ENCODE measurements at regions of chr10 and their contacts with region 1.

Region 1: DNA sequence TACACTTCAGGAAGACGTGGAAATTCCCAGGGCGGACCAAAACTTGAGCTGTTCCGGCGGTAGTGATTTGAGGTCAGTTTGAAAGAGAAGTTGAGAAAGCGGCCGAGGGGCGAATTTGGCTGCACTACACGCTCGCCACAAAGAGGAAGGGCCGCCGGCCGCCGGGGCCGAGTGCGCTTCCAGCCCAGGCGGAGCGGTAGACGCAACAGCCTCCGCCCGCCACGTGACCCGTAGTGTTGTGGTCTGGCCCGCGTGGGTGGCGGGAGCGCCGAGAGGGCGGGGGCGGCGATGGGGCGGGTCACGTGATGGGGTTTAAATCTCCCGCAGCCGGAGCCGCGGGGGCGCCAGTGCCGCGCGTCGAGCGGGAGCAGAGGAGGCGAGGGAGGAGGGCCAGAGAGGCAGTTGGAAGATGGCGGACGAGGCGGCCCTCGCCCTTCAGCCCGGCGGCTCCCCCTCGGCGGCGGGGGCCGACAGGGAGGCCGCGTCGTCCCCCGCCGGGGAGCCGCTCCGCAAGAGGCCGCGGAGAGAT is at the start of gene SIRT1:
- DNase-seq: peak; percentile 98
- H3K4me3 ChIP-seq: peak within 1 kb of the TSS; percentile 73
- H3K27ac ChIP-seq: peak within 1 kb of the TSS; percentile 95
- H3K4me1 ChIP-seq: peaks cover 3% of the 10 kb centered on the region
- H3K27me3 ChIP-seq: no peaks in the 10 kb centered on the region
- CTCF ChIP-seq: no peak
- total RNA-seq, gene SIRT1: 11.7 to 20.4 TPM

Region 2: DNA sequence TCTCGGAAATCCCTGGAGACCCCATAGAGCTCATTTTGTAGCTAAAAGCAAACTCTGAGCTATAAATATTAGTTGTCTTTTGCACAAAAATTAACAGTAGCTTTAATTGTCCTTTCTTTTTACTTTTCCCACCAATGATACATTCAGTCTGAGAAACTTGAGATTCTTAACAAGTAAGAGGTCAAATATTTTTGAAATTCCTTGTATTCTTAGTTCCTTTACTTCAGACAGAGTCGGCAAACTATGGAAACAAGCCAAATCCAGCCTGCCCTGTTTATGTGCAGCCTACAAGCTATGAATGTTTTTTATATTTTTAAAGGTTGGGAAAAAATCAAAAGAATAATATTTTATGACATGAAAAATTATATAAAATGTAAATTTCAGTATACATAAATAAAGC is 335.0 kb before region 1 on chr10:
- intact Hi-C with region 1: no loop called
- DNase-seq: no peak
- H3K4me3 ChIP-seq: no peak overlapping the region
- H3K27ac ChIP-seq: no peak overlapping the region
- H3K4me1 ChIP-seq: no peaks in the 10 kb centered on the region
- H3K27me3 ChIP-seq: no peaks in the 10 kb centered on the region
- CTCF ChIP-seq: no peak

Region 3: GRCh38 chr10:68074775-68075549 is 190.6 kb after region 1 on chr10 and contains the start of gene HERC4:
- intact Hi-C with region 1: loop called (anchors 10 kb)
- DNase-seq: peak; percentile 95
- H3K4me3 ChIP-seq: peak within 1 kb of the TSS; percentile 85
- H3K27ac ChIP-seq: peak within 1 kb of the TSS; percentile 99
- H3K4me1 ChIP-seq: peaks cover 9% of the 10 kb centered on the region
- H3K27me3 ChIP-seq: no peaks in the 10 kb centered on the region
- CTCF ChIP-seq: no peak
- total RNA-seq, gene HERC4: 35.3 to 51.5 TPM

Measured in colonic mucosa (tissue), 4 donors.